RWPE1 (cell line): ENCODE measurements at regions of chr20 and their contacts with region 1.

Region 1: DNA sequence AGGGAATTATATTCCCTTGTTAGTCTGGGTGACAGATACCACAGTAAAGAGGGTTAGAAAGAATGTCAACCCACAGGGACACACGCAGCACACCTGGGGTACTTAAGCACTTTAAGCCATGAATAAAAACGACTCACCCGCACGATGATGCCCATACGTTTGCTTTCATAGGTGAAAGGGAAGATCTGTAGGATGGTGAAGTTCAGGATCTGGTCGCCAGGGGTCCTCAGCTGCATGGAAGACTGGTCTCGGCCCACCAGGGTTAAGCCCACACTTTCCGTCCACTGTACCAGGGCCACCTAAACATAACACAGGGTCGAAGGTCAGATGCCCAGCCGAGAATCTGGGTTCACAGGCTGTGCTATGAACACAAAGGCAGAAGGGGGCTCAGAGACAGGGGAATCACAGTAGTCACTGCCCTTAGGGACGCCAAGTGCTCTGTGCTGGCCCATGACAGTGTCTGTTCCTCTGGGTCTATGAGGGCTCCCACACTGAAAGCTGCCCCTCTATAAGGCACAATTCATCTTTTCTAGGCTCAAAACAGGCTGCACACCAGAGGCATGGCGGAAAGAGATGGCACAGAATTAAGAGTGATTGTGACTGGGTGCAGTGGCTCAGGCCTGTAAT is 96.8 kb upstream of the NFATC2 start:
- DNase-seq: peak; percentile 86
- H3K27ac ChIP-seq: no peak overlapping the region
- CTCF ChIP-seq: peak; percentile 94

Region 2: GRCh38 chr20:51500311-51500710 is 139.0 kb before region 1 on chr20:
- CTCF ChIA-PET with region 1: no interaction called
- POLR2A ChIA-PET with region 1: no interaction called
- DNase-seq: peak; percentile 87
- H3K27ac ChIP-seq: no peak overlapping the region
- CTCF ChIP-seq: no peak

Region 3: GRCh38 chr20:51695574-51696303 is 56.4 kb after region 1 on chr20:
- CTCF ChIA-PET with region 1: interaction called, 12 read pairs
- POLR2A ChIA-PET with region 1: no interaction called
- DNase-seq: peak; percentile 28
- H3K27ac ChIP-seq: peak overlapping the region; percentile 72
- CTCF ChIP-seq: no peak

Region 4: GRCh38 chr20:52083627-52084232 is 444.4 kb after region 1 on chr20:
- CTCF ChIA-PET with region 1: interaction called, 12 read pairs
- POLR2A ChIA-PET with region 1: no interaction called
- DNase-seq: peak; percentile 82
- H3K27ac ChIP-seq: no peak overlapping the region
- CTCF ChIP-seq: peak; percentile 86